ENCODE measurements at regions of chr1 and their contacts with region 1.

Region 1: DNA sequence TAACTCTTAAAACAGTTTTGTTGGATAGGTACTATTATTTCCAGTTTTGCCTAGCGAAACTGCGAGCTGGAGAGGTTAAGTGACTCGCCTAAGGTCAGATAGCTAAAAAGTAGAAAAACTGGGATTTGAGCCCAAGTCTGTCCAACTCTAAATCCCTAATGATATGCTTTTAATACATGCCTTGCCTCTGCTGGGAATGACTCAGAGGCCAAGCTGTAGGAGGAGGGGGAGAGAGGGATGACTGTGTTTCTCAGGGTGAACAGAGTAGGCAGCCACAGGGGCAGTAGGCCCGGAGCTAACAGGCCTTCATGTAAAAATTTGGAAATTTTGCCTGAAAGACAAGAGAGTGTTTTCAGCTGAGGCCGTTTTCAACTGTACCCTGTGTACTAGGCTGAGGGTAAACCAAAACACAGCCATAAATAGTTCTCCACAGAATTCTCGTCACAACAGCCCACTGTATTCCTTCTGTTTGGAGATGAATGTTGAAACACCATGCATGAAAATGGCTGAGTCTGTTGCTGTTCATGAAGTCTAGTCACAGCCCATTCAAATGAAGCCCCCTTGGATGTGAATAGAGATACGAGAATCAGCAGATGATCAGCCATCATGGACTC is 107.5 kb upstream of the HOOK1 start:
- DNase-seq: peak in 2 of 4 donors; percentile 28 to 50
- ATAC-seq: peak; percentile 64
- H3K4me3 ChIP-seq: no peak overlapping the region
- H3K27ac ChIP-seq: no peak overlapping the region
- H3K4me1 ChIP-seq: peaks cover 3% of the 10 kb centered on the region
- H3K27me3 ChIP-seq: no peaks in the 10 kb centered on the region
- CTCF ChIP-seq: no peak
- POLR2A ChIP-seq: no peak

Region 2: DNA sequence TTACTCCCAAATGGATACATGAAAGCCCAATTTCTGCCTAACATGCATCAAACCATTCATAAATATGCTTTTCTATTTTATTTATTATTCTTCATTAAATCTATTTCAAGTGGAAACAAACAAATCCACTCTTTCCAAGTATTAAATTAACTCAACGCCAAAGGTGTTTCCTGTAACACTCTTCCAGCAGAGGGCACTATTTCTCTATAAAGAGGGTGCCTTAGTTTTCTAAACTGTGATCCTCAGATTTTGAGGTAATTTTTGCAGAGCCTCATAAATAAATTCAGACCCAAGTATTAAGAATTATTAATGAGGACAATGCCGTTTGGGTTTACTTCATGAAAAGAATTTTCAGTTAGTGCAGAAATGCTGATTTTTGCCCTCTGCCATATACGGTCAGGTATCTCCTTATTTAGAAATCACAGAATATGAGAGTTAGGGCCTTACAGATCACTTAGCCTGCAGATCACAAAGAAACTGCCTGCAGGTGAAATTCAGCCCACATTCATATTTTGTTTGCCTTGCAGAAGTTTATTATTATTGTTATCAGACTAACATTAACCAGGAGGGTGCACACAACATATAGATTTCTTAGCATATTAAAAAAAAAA is 967.3 kb before region 1 on chr1:
- intact Hi-C with region 1: loop called (anchors 10 kb)
- DNase-seq: peak in 2 of 4 donors; percentile 32 to 44
- ATAC-seq: peak; percentile 65
- H3K4me3 ChIP-seq: no peak overlapping the region
- H3K27ac ChIP-seq: no peak overlapping the region
- H3K4me1 ChIP-seq: no peaks in the 10 kb centered on the region
- H3K27me3 ChIP-seq: no peaks in the 10 kb centered on the region
- CTCF ChIP-seq: peak; percentile 50 to 95 (median 87)
- POLR2A ChIP-seq: no peak

Region 3: GRCh38 chr1:59296358-59297256 is 410.7 kb before region 1 on chr1 and contains the start of gene FGGY:
- intact Hi-C with region 1: loop called (anchors 10 kb)
- DNase-seq: peak; percentile 95 to 98 (median 96)
- ATAC-seq: peak; percentile 91
- H3K4me3 ChIP-seq: peak within 1 kb of the TSS in 1 of 2 donors; percentile 14
- H3K27ac ChIP-seq: peak within 1 kb of the TSS; percentile 89 to 96 (median 95)
- H3K4me1 ChIP-seq: peaks cover 31% of the 10 kb centered on the region
- H3K27me3 ChIP-seq: no peaks in the 10 kb centered on the region
- CTCF ChIP-seq: no peak
- POLR2A ChIP-seq: peak; percentile 89 to 94 (median 92)
- total RNA-seq, gene FGGY: 12.2 to 17.4 TPM

Region 4: DNA sequence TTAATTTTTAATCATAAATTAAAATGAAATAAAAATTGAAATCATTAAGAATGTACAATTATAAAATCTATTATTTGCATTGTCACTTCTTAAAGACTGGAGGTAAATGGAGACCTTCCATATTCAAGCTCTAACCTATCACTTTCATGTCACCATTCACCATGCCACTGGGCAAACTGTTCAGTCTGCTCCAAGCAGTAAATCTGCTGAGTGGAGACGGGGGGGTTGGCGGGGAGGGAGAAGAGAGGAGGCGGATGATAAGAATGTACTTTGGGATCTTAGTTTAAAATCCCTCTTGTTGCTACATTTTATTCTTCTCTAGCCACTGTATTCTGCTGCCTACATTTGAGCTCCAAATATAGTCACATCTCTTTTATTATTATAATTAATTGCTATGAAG is 1009.2 kb after region 1 on chr1:
- intact Hi-C with region 1: no loop called
- DNase-seq: no peak
- ATAC-seq: no peak
- H3K4me3 ChIP-seq: no peak overlapping the region
- H3K27ac ChIP-seq: no peak overlapping the region
- H3K4me1 ChIP-seq: no peaks in the 10 kb centered on the region
- H3K27me3 ChIP-seq: no peaks in the 10 kb centered on the region
- CTCF ChIP-seq: no peak
- POLR2A ChIP-seq: no peak